ENCODE measurements at regions of chr21 and their contacts with region 1.

Region 1: DNA sequence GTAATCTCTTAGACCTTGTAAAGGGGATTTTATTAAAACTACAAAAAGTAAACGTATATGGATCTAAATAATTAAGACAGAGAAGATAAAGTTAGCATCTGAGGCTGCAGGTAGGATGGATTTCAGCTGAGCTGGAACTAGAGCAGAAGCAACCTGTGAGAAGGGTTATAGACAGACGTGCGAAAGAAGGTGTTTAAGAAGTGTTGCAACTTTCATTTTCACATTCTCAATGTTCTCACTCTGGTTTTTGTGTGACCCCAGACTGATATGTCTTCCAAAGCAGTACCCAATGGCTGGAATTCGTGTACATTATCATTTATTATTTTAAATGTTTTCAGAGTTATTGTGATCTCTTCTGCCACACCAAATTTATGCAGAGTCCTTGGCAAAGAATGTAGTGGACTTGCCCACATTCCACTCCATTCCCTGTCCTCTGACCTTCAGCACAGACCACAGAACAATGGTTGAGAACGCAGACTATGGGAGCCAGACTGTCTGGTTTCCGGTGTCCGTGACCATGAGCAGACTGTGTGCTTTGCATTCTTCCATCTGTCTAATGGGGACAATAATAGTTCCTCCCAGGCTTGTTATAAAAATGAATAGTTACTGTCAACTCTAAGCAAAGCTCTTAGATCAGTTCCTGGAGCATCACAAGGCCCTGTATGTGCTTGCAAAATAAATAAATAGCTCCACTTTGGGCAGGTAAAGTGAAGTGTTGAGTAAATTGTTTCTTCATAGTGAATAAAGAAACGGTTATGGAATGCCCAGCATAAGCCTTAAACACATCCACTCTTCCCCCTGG is 140.6 kb upstream of the SAMSN1 start:
- DNase-seq: no peak
- H3K4me3 Mint-ChIP-seq: peak overlapping the region; percentile 41
- H3K27ac Mint-ChIP-seq: peak overlapping the region; percentile 40
- H3K4me1 Mint-ChIP-seq: peaks cover 33% of the 10 kb centered on the region
- H3K27me3 Mint-ChIP-seq: no peaks in the 10 kb centered on the region

Region 2: DNA sequence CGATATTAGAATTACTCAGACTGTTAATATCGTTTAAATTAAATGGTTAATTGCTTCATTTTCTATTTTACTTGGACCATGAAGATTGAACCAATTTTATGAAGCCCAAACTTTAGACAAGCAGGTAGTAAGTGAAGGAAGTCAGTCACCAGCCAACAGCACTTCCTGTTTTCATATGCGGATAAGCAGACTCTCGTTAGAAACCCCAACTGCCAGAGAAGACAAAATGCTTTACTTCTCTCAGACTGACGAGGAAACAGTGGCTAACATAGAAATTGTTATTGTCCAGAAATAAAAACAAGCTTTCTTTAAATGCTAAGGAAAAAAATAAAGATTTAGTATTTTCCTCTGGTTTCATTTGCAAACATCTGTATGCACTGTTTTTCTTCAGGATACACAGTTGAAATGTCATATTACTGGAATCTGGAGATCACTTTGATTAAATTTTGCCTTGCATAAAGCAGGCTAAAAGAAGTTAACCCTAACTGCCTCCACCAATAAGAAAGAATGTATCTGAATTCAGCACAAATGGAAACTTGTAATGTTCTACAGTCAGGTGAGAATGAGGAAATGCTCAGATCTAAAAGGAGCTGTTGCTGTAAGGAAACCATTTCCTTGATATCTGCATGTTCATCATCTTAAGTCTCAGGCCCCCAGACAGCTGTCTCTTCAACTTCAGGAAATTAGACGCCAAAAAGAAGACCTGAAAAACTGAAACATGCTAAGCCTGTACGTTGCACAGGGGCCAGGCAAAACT is 10.7 kb before region 1 on chr21:
- CTCF ChIA-PET with region 1: no interaction called
- POLR2A ChIA-PET with region 1: interaction called, 11 read pairs
- DNase-seq: peak; percentile 23
- H3K4me3 Mint-ChIP-seq: peak overlapping the region; percentile 40
- H3K27ac Mint-ChIP-seq: peak overlapping the region; percentile 98
- H3K4me1 Mint-ChIP-seq: peaks cover 31% of the 10 kb centered on the region
- H3K27me3 Mint-ChIP-seq: no peaks in the 10 kb centered on the region